ENCODE measurements at regions of chr6 and their contacts with region 1.

Region 1: GRCh38 chr6:137363805-137364138 is 130.4 kb downstream of the OLIG3 start:
- H3K4me3 Mint-ChIP-seq: no peak overlapping the region
- H3K27ac Mint-ChIP-seq: no peak overlapping the region
- H3K4me1 Mint-ChIP-seq: peaks cover 5% of the 10 kb centered on the region
- H3K27me3 Mint-ChIP-seq: no peaks in the 10 kb centered on the region

Region 2: GRCh38 chr6:137136065-137136464 is 227.7 kb before region 1 on chr6:
- intact Hi-C with region 1: no loop called
- H3K4me3 Mint-ChIP-seq: no peak overlapping the region
- H3K27ac Mint-ChIP-seq: no peak overlapping the region
- H3K4me1 Mint-ChIP-seq: peaks cover 16% of the 10 kb centered on the region
- H3K27me3 Mint-ChIP-seq: peaks cover 7% of the 10 kb centered on the region

Region 3: GRCh38 chr6:137218917-137219663 is 144.7 kb before region 1 on chr6 and contains the start of gene IFNGR1:
- intact Hi-C with region 1: no loop called
- H3K4me3 Mint-ChIP-seq: peak within 1 kb of the TSS; percentile 93
- H3K27ac Mint-ChIP-seq: peak within 1 kb of the TSS; percentile 100
- H3K4me1 Mint-ChIP-seq: peaks cover 66% of the 10 kb centered on the region
- H3K27me3 Mint-ChIP-seq: no peaks in the 10 kb centered on the region

Region 4: GRCh38 chr6:137261393-137262160 is 102.2 kb before region 1 on chr6:
- intact Hi-C with region 1: no loop called
- H3K4me3 Mint-ChIP-seq: no peak overlapping the region
- H3K27ac Mint-ChIP-seq: no peak overlapping the region
- H3K4me1 Mint-ChIP-seq: peaks cover 27% of the 10 kb centered on the region
- H3K27me3 Mint-ChIP-seq: no peaks in the 10 kb centered on the region

Region 5: GRCh38 chr6:137391061-137391814 is 27.5 kb after region 1 on chr6:
- intact Hi-C with region 1: no loop called
- H3K4me3 Mint-ChIP-seq: no peak overlapping the region
- H3K27ac Mint-ChIP-seq: no peak overlapping the region
- H3K4me1 Mint-ChIP-seq: peaks cover 60% of the 10 kb centered on the region
- H3K27me3 Mint-ChIP-seq: no peaks in the 10 kb centered on the region

Region 6: GRCh38 chr6:137405806-137406205 is 42.0 kb after region 1 on chr6:
- intact Hi-C with region 1: loop called (anchors 5 kb)
- H3K4me3 Mint-ChIP-seq: no peak overlapping the region
- H3K27ac Mint-ChIP-seq: no peak overlapping the region
- H3K4me1 Mint-ChIP-seq: no peaks in the 10 kb centered on the region
- H3K27me3 Mint-ChIP-seq: no peaks in the 10 kb centered on the region

Measured in dendritic cell treated with granulocyte-macrophage colony-stimulating factor and Interleukin-4, amounts not matched to agents 40 ng/mL and 50 ng/mL, for 4 days (primary cell).